Activated CD4-positive, alpha-beta T cell treated with anti-CD3 and anti-CD28 coated beads for 36 hours (primary cell): ENCODE measurements at regions of chr2 and their contacts with region 1.

Region 1: DNA sequence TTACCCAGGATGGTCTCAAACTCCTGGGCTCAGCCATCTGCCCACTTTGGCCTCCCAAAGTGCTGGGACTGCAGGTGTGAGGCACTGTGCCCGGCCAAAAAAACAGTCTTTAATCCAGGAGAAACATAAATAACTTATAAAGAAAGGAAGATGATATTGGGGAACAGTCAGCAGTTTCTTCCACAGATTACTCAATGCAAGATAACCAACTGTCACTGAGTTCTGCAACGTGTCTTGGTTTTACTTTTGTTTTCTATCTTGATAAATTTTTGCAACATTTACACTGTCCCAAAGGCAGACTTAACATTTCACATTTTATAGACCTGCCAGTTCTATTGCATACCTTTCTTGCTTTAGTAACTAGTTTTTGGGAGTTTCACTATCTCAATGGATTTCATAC is 71.1 kb downstream of the ANKRD44 start:
- DNase-seq: no peak
- ATAC-seq: peak; percentile 59
- H3K4me3 Mint-ChIP-seq: peak overlapping the region; percentile 75
- H3K27ac Mint-ChIP-seq: peak overlapping the region; percentile 92
- H3K4me1 Mint-ChIP-seq: peaks cover 87% of the 10 kb centered on the region
- H3K27me3 Mint-ChIP-seq: no peaks in the 10 kb centered on the region

Region 2: GRCh38 chr2:197209742-197210408 is 29.6 kb before region 1 on chr2:
- CTCF ChIA-PET with region 1: interaction called, 6 read pairs
- POLR2A ChIA-PET with region 1: interaction called, 4 read pairs
- intact Hi-C with region 1: loop called in 1 of 2 experiments (anchors 1 kb)
- DNase-seq: peak; percentile 82
- ATAC-seq: peak; percentile 64
- H3K4me3 Mint-ChIP-seq: peak overlapping the region; percentile 30
- H3K27ac Mint-ChIP-seq: peak overlapping the region; percentile 99
- H3K4me1 Mint-ChIP-seq: peaks cover 98% of the 10 kb centered on the region
- H3K27me3 Mint-ChIP-seq: no peaks in the 10 kb centered on the region

Region 3: GRCh38 chr2:197216361-197216979 is 23.0 kb before region 1 on chr2:
- CTCF ChIA-PET with region 1: interaction called, 5 read pairs
- POLR2A ChIA-PET with region 1: interaction called, 4 read pairs
- intact Hi-C with region 1: loop called in 1 of 2 experiments (anchors 2 kb)
- DNase-seq: no peak
- ATAC-seq: peak; percentile 54
- H3K4me3 Mint-ChIP-seq: peak overlapping the region; percentile 70
- H3K27ac Mint-ChIP-seq: peak overlapping the region; percentile 99
- H3K4me1 Mint-ChIP-seq: peaks cover 88% of the 10 kb centered on the region
- H3K27me3 Mint-ChIP-seq: no peaks in the 10 kb centered on the region

Region 4: GRCh38 chr2:197255543-197255942 is 16.1 kb after region 1 on chr2:
- CTCF ChIA-PET with region 1: interaction called, 8 read pairs
- POLR2A ChIA-PET with region 1: interaction called, 4 read pairs
- intact Hi-C with region 1: loop called in 1 of 2 experiments (anchors 2 kb)
- DNase-seq: peak; percentile 90
- ATAC-seq: peak; percentile 89
- H3K4me3 Mint-ChIP-seq: peak overlapping the region; percentile 75
- H3K27ac Mint-ChIP-seq: peak overlapping the region; percentile 96
- H3K4me1 Mint-ChIP-seq: peaks cover 80% of the 10 kb centered on the region
- H3K27me3 Mint-ChIP-seq: no peaks in the 10 kb centered on the region

Region 5: GRCh38 chr2:197261808-197262226 is 22.4 kb after region 1 on chr2:
- CTCF ChIA-PET with region 1: interaction called, 8 read pairs
- POLR2A ChIA-PET with region 1: interaction called, 10 read pairs
- intact Hi-C with region 1: no loop called
- DNase-seq: no peak
- ATAC-seq: peak; percentile 2
- H3K4me3 Mint-ChIP-seq: peak overlapping the region; percentile 56
- H3K27ac Mint-ChIP-seq: peak overlapping the region; percentile 88
- H3K4me1 Mint-ChIP-seq: peaks cover 82% of the 10 kb centered on the region
- H3K27me3 Mint-ChIP-seq: no peaks in the 10 kb centered on the region

Region 6: DNA sequence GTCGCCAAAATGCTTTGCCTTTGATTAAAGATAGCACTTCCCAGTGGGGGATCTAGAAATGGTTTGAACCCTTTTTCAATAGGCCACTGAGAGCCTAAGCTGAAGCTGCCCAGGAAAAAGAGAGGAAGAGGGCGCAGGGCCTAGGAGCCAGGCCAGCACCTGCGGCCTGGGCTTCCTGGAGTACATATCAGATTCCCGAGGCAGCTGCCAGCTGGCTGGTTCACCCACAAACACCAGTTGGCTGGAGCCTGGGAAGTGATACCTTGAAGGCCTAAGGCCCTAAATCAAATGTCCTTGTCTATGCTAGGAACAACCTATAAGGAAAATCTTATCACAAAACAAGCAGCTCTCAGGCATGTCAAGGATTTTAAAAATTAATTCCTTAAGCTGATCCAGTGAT is 34.1 kb after region 1 on chr2:
- CTCF ChIA-PET with region 1: no interaction called
- POLR2A ChIA-PET with region 1: no interaction called
- intact Hi-C with region 1: no loop called
- DNase-seq: no peak
- ATAC-seq: no peak
- H3K4me3 Mint-ChIP-seq: no peak overlapping the region
- H3K27ac Mint-ChIP-seq: peak overlapping the region; percentile 80
- H3K4me1 Mint-ChIP-seq: peaks cover 75% of the 10 kb centered on the region
- H3K27me3 Mint-ChIP-seq: no peaks in the 10 kb centered on the region